Ovary (tissue), 10 donors: ENCODE measurements at regions of chr2 and their contacts with region 1.

Region 1: GRCh38 chr2:226799181-226799975 is at the start of gene IRS1:
- DNase-seq: peak; percentile 82 to 91 (median 87)
- H3K4me3 ChIP-seq: peak within 1 kb of the TSS; percentile 93
- H3K27ac ChIP-seq: peak within 1 kb of the TSS; percentile 90 to 96
- H3K4me1 ChIP-seq: peaks cover 1% of the 10 kb centered on the region
- H3K27me3 ChIP-seq: no peaks in the 10 kb centered on the region
- CTCF ChIP-seq: peak in 2 of 3 donors; percentile 40 to 74
- EP300 ChIP-seq: no peak
- POLR2A ChIP-seq: no peak
- total RNA-seq, gene IRS1: 29.5 to 87.0 (median 45.1) TPM

Region 2: DNA sequence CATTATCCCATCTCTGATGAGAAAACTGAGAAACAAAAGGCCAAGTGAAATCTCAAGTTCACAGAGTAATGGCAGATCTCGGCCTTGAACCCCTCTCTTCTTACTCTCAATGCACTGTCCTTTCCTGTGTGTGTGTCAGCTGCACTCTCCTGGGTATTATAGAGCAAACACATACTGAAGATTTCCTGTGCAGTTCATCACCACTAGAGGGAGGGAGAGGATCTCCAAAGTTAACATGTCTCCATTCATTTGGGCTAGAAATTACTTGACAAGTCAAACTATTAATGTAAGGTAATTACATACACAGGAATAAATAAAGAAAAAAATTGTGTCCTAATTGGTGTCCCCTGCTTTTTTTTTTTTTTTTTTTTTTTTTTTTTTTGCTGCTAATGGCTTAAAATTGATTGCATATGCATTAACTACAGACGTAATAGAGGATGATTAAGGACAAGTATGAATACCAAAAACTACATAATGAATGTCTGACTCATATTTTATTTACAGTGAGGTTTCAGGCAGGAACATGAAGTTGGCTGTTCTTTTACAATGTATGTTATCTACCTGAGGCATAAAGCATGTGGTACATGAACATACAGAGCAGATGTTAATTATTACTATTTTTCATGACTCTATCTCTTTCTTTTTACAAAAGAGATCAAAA is 1130.6 kb before region 1 on chr2:
- intact Hi-C with region 1: loop called (anchors 2 to 10 kb)
- DNase-seq: peak in 1 of 5 donors; percentile 16
- H3K4me3 ChIP-seq: no peak overlapping the region
- H3K27ac ChIP-seq: no peak overlapping the region
- H3K4me1 ChIP-seq: no peaks in the 10 kb centered on the region
- H3K27me3 ChIP-seq: no peaks in the 10 kb centered on the region
- CTCF ChIP-seq: peak; percentile 12 to 75 (median 51)
- EP300 ChIP-seq: no peak
- POLR2A ChIP-seq: no peak

Region 3: GRCh38 chr2:226124548-226125011 is 674.8 kb before region 1 on chr2:
- intact Hi-C with region 1: loop called in 1 of 4 experiments (anchors 5 kb)
- DNase-seq: no peak
- H3K4me3 ChIP-seq: no peak overlapping the region
- H3K27ac ChIP-seq: peak overlapping the region in 1 of 2 donors; percentile 11
- H3K4me1 ChIP-seq: peaks cover 5% of the 10 kb centered on the region
- H3K27me3 ChIP-seq: no peaks in the 10 kb centered on the region
- CTCF ChIP-seq: no peak
- EP300 ChIP-seq: no peak
- POLR2A ChIP-seq: no peak

Region 4: DNA sequence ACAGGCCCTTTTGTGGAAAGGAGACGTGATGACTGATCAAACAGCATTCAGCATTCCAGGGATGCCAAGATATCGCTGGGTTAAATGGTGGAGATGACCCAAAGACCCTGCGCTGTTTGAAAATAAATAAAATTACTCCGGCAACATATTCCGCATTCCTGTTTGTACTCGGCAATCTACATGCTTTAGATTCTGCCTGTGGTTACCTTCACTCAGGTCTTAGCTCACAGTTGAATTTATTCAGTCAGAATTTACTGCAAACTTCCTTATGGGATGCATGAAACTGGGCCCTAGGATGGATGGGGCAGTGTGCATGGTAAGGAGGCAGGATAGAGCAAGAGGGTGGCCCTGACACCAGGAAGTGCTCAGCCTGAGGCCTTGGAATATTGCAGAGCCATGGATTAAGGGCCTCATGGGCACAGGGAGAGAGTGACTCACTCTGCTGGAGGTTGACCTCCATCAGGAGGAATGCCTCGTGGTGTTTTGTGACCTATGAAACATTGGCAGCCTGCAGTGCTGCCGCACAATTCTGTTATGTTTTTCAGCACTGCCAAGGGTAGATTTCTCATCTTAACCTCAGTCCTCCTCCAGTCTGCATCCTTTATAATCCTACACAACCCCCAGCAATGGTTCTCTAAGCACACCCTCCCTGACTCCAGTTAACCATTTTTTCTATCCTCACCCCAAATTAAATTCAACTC is 321.1 kb before region 1 on chr2:
- intact Hi-C with region 1: loop called in 3 of 4 experiments (anchors 5 to 10 kb)
- DNase-seq: peak; percentile 49 to 70 (median 62)
- H3K4me3 ChIP-seq: no peak overlapping the region
- H3K27ac ChIP-seq: peak overlapping the region in 1 of 2 donors; percentile 70
- H3K4me1 ChIP-seq: peaks cover 2% of the 10 kb centered on the region
- H3K27me3 ChIP-seq: no peaks in the 10 kb centered on the region
- CTCF ChIP-seq: no peak
- EP300 ChIP-seq: no peak
- POLR2A ChIP-seq: no peak

Region 5: GRCh38 chr2:226631671-226632070 is 167.7 kb before region 1 on chr2:
- intact Hi-C with region 1: loop called in 3 of 4 experiments (anchors 2 to 10 kb)
- DNase-seq: peak; percentile 47 to 72 (median 63)
- H3K4me3 ChIP-seq: no peak overlapping the region
- H3K27ac ChIP-seq: peak overlapping the region in 1 of 2 donors; percentile 79
- H3K4me1 ChIP-seq: peaks cover 5% of the 10 kb centered on the region
- H3K27me3 ChIP-seq: no peaks in the 10 kb centered on the region
- CTCF ChIP-seq: peak in 1 of 3 donors; percentile 3
- EP300 ChIP-seq: peak; percentile 29
- POLR2A ChIP-seq: no peak

Region 6: GRCh38 chr2:226875438-226876225 is 76.3 kb after region 1 on chr2:
- intact Hi-C with region 1: no loop called
- DNase-seq: no peak
- H3K4me3 ChIP-seq: no peak overlapping the region
- H3K27ac ChIP-seq: no peak overlapping the region
- H3K4me1 ChIP-seq: no peaks in the 10 kb centered on the region
- H3K27me3 ChIP-seq: no peaks in the 10 kb centered on the region
- CTCF ChIP-seq: no peak
- EP300 ChIP-seq: no peak
- POLR2A ChIP-seq: no peak

Region 7: GRCh38 chr2:226984750-226985582 is 185.6 kb after region 1 on chr2:
- intact Hi-C with region 1: loop called in 2 of 4 experiments (anchors 2 kb)
- DNase-seq: peak in 4 of 5 donors; percentile 44 to 77 (median 50)
- H3K4me3 ChIP-seq: no peak overlapping the region
- H3K27ac ChIP-seq: peak overlapping the region; percentile 23 to 64
- H3K4me1 ChIP-seq: peaks cover 23% of the 10 kb centered on the region
- H3K27me3 ChIP-seq: no peaks in the 10 kb centered on the region
- CTCF ChIP-seq: peak; percentile 65 to 89 (median 67)
- EP300 ChIP-seq: no peak
- POLR2A ChIP-seq: no peak